Activated naive CD4-positive, alpha-beta T cell treated with anti-CD3 and anti-CD28 coated beads for 36 hours (primary cell): ENCODE measurements at regions of chr6 and their contacts with region 1.

Region 1: DNA sequence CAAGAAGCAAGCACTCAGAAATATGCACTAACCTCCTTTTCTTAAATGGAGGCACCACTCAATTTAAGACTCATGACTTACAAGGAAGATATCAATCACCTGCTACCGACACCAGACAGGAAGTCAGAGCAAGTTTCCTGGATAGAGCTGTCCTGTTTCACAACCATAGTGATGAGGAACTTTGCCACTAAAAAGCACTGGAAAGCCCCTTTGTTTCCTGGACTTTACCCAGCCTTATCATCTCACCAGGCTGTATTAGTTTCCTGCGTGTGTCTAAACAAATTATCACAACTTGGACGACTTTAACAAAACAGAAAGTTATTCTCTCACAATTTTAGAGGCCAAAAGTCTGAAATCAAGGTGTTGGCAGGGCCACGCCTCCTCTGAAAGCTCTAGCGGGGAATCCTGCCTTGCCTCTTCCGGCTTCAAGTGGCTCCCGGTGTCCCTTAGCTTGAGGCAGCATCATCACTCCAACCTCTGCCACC is 253.8 kb upstream of the STXBP5 start:
- DNase-seq: peak; percentile 65
- H3K4me3 Mint-ChIP-seq: no peak overlapping the region
- H3K27ac Mint-ChIP-seq: peak overlapping the region; percentile 88
- H3K4me1 Mint-ChIP-seq: peaks cover 17% of the 10 kb centered on the region
- H3K27me3 Mint-ChIP-seq: no peaks in the 10 kb centered on the region

Region 2: GRCh38 chr6:146785001-146785585 is 165.3 kb before region 1 on chr6:
- CTCF ChIA-PET with region 1: no interaction called
- intact Hi-C with region 1: no loop called
- DNase-seq: peak; percentile 52
- H3K4me3 Mint-ChIP-seq: no peak overlapping the region
- H3K27ac Mint-ChIP-seq: no peak overlapping the region
- H3K4me1 Mint-ChIP-seq: no peaks in the 10 kb centered on the region
- H3K27me3 Mint-ChIP-seq: no peaks in the 10 kb centered on the region

Region 3: DNA sequence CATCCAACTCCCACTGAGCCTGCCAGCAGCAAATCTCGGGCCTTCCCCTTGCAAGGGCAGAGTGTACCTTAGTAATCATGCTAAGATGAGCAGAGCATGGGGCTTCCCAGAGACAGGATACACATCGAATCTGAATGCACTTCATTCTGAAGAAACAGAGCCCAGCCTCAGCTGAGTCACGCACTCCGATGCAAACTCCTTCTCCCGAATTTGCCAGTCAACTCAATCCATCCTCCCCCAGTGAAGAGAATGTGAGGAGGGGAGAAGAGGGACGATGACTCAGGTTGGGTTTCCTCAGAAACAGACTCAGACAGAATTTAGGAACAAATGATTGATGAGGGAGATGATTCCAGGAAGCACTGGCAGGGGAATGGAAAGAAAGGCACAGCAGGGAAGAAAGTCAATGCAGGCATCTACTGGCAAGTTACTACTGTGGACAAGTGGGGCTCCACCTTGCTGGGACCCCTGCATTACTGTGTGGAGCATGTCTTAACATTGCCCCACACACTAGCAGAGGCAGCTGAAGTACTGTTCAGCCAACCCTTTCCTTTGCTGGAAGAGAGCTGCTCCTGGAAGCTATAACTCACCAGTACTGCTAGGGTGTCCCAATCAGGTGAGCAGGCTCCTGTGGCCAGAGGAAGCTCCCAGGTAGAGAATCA is 100.0 kb before region 1 on chr6:
- CTCF ChIA-PET with region 1: no interaction called
- intact Hi-C with region 1: loop called (anchors 1 kb)
- DNase-seq: peak; percentile 72
- H3K4me3 Mint-ChIP-seq: no peak overlapping the region
- H3K27ac Mint-ChIP-seq: peak overlapping the region; percentile 71
- H3K4me1 Mint-ChIP-seq: peaks cover 31% of the 10 kb centered on the region
- H3K27me3 Mint-ChIP-seq: peaks cover 7% of the 10 kb centered on the region

Region 4: DNA sequence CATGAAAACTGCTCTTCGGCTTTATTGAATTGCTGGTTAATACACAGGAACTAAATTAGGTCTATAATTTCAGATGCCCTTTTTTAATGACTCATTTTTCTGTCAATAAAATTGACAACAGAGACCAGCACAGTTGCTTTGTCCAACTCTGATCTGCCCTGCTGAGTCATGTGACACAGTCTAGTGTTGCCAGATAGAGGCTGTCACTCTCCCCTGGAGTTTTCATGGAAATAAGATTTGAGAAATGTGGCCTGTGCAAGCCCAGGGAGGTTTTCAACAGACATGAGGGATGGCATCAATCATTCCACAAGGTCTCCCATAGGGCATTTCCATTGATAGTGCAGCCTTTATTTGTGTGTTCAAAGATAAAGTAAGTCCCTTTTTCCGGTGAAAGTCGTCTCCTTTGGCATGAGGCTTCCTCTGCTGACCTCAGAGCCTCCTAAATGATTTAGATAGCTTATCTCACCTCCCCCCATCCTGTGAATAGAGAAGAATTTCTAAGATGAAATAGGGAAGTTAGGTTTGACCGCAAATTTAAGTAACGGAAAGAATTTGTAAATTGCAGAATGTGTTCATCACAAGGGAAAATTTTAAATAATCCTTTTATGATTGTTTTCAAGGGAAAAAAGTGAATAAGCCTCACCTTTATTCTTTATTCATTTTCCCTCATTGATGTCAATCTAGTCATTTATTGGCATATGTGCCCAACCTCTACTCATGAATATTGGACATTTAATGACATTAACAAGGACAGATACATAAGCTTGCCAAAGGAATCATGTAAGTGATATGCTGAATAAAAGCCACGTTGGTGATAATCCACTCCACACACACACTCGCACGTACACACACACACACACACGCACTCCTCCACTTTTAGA is 73.9 kb before region 1 on chr6:
- CTCF ChIA-PET with region 1: no interaction called
- intact Hi-C with region 1: loop called (anchors 5 kb)
- DNase-seq: no peak
- H3K4me3 Mint-ChIP-seq: no peak overlapping the region
- H3K27ac Mint-ChIP-seq: peak overlapping the region; percentile 62
- H3K4me1 Mint-ChIP-seq: peaks cover 19% of the 10 kb centered on the region
- H3K27me3 Mint-ChIP-seq: no peaks in the 10 kb centered on the region

Region 5: DNA sequence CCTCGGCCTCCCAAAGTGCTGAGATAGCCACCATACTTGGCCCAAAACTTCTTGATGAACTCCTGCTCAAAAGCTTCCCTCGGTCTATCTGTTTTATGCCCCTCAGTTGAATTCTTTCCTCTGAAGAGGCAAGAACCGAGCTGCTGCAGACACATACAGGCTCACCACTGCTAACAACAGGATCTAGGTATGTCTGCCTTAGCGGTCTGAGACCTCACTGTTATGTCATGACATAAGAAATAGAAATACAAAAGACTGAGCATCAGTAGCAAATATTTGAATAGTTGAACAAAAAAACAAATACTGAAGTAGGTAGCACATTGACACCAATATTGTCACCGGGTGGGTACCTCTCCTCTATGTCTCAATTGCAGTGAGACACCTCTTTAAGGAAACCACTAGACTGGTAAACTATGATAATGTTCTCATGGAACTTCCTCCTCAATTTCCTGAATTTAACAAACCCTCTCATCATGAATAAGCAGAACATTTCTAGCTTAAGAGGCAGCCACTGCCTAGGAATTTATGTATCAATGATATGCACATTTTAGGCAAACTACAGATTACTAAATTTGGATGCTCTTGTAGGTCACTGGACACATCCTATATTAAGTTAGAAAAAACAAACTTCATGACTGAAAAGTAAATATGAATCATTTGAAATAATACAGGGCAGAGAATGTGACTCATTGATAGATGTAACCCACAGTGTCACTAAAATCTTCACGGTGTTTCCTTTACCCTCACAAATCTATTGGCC is 244.4 kb after region 1 on chr6:
- CTCF ChIA-PET with region 1: no interaction called
- intact Hi-C with region 1: loop called (anchors 1 kb)
- DNase-seq: no peak
- H3K4me3 Mint-ChIP-seq: peak overlapping the region; percentile 25
- H3K27ac Mint-ChIP-seq: peak overlapping the region; percentile 88
- H3K4me1 Mint-ChIP-seq: peaks cover 22% of the 10 kb centered on the region
- H3K27me3 Mint-ChIP-seq: no peaks in the 10 kb centered on the region

Region 6: GRCh38 chr6:147268254-147268653 is 317.9 kb after region 1 on chr6:
- CTCF ChIA-PET with region 1: no interaction called
- intact Hi-C with region 1: loop called (anchors 1 kb)
- DNase-seq: no peak
- H3K4me3 Mint-ChIP-seq: no peak overlapping the region
- H3K27ac Mint-ChIP-seq: peak overlapping the region; percentile 83
- H3K4me1 Mint-ChIP-seq: peaks cover 17% of the 10 kb centered on the region
- H3K27me3 Mint-ChIP-seq: no peaks in the 10 kb centered on the region

Region 7: GRCh38 chr6:148203970-148204369 is 1253.6 kb after region 1 on chr6:
- CTCF ChIA-PET with region 1: no interaction called
- intact Hi-C with region 1: loop called (anchors 2 kb)
- DNase-seq: peak; percentile 87
- H3K4me3 Mint-ChIP-seq: peak overlapping the region; percentile 48
- H3K27ac Mint-ChIP-seq: peak overlapping the region; percentile 85
- H3K4me1 Mint-ChIP-seq: peaks cover 50% of the 10 kb centered on the region
- H3K27me3 Mint-ChIP-seq: peaks cover 72% of the 10 kb centered on the region